Endothelial cell of umbilical vein (primary cell): ENCODE measurements at regions of chr5 and their contacts with region 1.

Region 1: DNA sequence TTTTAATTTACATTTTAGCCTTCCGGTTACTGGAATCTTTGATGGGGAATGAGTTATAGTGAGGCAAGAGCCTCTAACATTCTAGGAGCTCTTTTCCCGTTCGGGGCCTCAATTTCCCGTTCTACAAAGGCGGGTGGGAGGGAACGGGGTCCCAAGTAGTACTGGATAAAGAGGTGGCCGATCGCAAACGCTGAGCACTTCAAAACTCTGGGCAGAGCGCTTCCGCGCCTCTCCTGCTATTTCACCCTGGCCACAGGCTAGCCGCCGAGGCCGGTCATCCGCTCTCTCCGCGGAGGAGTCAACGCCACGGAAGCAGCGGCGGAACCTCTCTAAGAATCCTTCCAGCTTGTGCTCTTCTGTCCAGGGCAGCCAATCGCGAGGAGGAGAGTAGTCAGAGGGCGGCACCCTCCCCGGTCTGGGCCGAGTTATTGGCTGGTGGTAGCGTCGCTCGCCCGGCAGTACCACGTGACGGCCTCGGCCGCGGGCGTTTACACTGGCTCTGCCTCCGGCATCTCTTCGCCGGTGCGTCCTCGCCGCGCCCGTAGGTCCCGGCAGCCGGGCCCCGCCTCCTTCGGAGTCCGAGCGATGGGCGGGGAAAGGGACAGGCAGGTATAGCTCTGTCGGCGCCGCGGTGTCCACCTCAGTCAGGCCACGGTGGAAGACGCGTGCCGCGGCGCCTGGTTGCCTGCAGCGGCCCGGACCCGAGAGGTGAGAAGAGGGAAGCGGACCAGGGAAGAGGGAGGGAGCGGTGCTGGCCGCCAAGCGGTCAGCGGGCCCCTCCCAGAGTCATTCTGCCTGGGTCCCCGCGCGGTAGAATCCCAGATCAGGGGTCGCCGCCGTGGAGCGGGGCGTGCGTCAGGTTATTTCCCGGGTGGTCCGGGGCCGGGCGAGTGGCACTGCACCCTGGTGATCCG is at the start of gene SLC26A2:
- DNase-seq: peak; percentile 98
- H3K4me3 ChIP-seq: peak within 1 kb of the TSS; percentile 71 to 76 (median 74)
- H3K27ac ChIP-seq: peak within 1 kb of the TSS; percentile 85
- H3K4me1 ChIP-seq: peaks cover 21% of the 10 kb centered on the region
- H3K27me3 ChIP-seq: no peaks in the 10 kb centered on the region
- CTCF ChIP-seq: no peak
- POLR2A ChIP-seq: peak; percentile 88
- total RNA-seq, gene SLC26A2: 16.5 and 16.8 TPM in 2 replicates

Region 2: DNA sequence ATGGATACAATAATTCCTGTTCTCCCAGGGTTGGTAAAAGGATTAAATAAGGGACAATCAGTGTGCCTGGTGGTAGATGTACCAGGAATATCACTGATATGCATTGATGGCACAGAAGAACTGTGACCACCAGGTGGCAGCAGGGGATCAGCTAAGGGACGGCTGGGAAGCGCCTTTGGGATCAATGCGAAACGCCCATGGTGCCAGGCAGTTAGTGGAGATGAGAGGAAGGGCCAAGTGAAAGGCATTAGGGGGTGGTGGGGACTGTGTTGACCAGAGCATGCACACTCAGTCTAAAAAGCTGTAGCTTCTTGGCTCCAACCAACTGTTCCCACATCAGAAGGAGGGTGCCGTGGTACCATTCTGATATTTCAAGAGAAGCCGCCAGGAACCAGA is 323.7 kb before region 1 on chr5:
- CTCF ChIA-PET with region 1: interaction called, 9 read pairs
- POLR2A ChIA-PET with region 1: no interaction called
- dilution Hi-C with region 1: no loop called
- intact Hi-C with region 1: loop called (anchors 1 kb)
- DNase-seq: peak; percentile 57
- H3K4me3 ChIP-seq: no peak overlapping the region
- H3K27ac ChIP-seq: no peak overlapping the region
- H3K4me1 ChIP-seq: peaks cover 12% of the 10 kb centered on the region
- H3K27me3 ChIP-seq: no peaks in the 10 kb centered on the region
- CTCF ChIP-seq: peak; percentile 72 to 74
- POLR2A ChIP-seq: no peak

Region 3: GRCh38 chr5:149765932-149766331 is 194.6 kb before region 1 on chr5:
- CTCF ChIA-PET with region 1: no interaction called
- POLR2A ChIA-PET with region 1: no interaction called
- dilution Hi-C with region 1: no loop called
- intact Hi-C with region 1: no loop called
- DNase-seq: no peak
- H3K4me3 ChIP-seq: no peak overlapping the region
- H3K27ac ChIP-seq: no peak overlapping the region
- H3K4me1 ChIP-seq: no peaks in the 10 kb centered on the region
- H3K27me3 ChIP-seq: no peaks in the 10 kb centered on the region
- CTCF ChIP-seq: no peak
- POLR2A ChIP-seq: no peak

Region 4: GRCh38 chr5:149852641-149853330 is 107.7 kb before region 1 on chr5:
- CTCF ChIA-PET with region 1: interaction called, 208 read pairs
- POLR2A ChIA-PET with region 1: no interaction called
- dilution Hi-C with region 1: no loop called
- intact Hi-C with region 1: loop called (anchors 1 kb)
- DNase-seq: peak; percentile 75
- H3K4me3 ChIP-seq: no peak overlapping the region
- H3K27ac ChIP-seq: no peak overlapping the region
- H3K4me1 ChIP-seq: peaks cover 7% of the 10 kb centered on the region
- H3K27me3 ChIP-seq: no peaks in the 10 kb centered on the region
- CTCF ChIP-seq: peak; percentile 89 to 98
- POLR2A ChIP-seq: no peak

Region 5: DNA sequence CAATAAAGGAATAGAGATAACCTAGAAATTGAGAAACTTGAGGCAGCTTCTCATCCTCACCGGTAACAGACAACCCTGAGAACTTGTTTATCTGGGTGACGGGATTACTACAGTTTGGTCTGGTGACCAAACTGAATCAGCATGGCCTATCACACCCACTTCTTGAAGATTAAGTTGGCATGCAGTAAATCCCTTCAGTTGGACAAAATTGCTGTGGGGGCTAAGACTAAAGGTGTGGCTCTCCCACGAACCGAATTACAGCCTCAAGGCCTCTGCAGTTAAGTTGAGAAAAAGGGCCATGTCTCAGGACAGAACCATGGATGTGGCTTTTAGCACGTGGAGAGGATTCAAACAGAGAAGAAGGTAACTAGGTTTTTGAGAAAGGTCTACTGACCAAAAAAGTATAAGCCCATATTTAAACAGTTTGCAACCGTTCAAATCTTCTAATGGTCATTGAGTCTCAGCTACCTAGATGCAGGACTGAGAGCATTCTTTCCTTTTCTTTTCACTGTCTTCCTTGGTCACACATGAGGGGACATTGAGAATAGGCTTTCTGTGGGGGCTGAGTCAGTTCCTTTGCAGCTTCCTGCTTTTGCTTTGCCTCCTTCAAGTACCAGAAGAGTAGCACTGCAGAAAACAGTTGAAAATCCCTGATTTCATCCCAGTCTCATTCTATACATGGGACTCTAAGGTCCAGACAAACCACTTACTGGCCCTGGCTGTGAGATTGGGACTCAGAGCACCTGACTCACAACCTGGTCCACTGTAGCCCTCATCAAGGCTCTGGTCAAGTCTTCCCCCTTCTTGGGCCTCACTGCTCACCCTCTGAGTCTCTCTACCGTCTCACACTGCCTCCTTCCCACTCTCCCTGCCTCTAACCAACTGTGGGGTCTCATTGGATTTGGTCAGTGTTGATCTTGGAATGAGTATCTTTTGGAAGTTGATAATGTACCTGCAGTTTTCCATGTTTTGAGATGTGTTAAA is 46.8 kb before region 1 on chr5:
- CTCF ChIA-PET with region 1: interaction called, 7 read pairs
- POLR2A ChIA-PET with region 1: no interaction called
- dilution Hi-C with region 1: no loop called
- intact Hi-C with region 1: loop called (anchors 1 kb)
- DNase-seq: peak; percentile 61
- H3K4me3 ChIP-seq: no peak overlapping the region
- H3K27ac ChIP-seq: peak overlapping the region; percentile 10
- H3K4me1 ChIP-seq: peaks cover 28% of the 10 kb centered on the region
- H3K27me3 ChIP-seq: no peaks in the 10 kb centered on the region
- CTCF ChIP-seq: no peak
- POLR2A ChIP-seq: no peak

Region 6: GRCh38 chr5:149938791-149939358 is 21.7 kb before region 1 on chr5:
- CTCF ChIA-PET with region 1: interaction called, 68 read pairs
- POLR2A ChIA-PET with region 1: interaction called, 5 read pairs
- dilution Hi-C with region 1: no loop called
- intact Hi-C with region 1: loop called (anchors 1 kb)
- DNase-seq: peak; percentile 77
- H3K4me3 ChIP-seq: no peak overlapping the region
- H3K27ac ChIP-seq: peak overlapping the region; percentile 88
- H3K4me1 ChIP-seq: peaks cover 33% of the 10 kb centered on the region
- H3K27me3 ChIP-seq: no peaks in the 10 kb centered on the region
- CTCF ChIP-seq: no peak
- POLR2A ChIP-seq: no peak